Motor neuron (in vitro differentiated cells): ENCODE measurements at regions of chr12 and their contacts with region 1.

Region 1: DNA sequence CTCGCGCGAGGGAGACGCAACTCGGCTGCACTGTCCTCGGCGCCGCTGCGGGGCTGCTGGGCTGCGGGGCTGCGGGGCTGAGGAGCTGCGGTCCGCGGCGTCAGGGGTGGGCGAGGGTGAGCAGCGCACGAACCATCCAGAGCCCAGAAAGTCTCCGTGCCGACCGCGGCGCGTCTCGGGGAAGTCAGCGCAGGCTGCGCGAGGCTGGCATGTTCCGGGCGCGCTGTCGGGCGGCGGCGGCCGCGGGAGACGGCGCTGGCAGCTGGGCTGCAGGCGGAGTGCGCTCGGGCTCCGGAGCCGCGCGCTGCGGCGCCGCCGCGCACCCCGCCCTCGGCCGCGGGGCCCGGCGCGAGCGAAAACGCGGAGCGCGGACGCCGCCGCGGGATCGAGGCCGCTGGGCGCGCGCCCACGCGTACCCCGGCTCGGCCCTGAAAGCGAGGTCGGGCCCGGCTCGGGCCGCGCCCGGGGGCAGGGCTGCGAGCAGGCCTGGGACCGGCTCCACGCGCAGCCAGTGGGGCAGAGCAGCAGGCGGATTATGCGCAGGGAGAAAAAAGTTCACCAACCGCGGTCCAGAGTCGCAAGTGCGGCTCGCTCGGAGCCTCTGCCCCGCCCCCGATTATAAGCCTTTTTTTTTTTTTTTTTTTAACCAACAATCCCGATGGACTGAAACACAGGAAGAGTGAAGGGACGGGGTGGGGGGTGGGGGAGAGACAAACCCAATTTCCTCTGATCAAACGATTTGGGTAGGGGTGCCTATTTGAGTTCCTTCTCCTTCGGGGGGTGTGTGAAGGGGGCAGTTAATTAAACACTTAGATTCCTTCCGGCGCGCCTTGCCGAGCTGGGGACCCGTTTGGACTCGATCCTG is at the start of gene PRICKLE1:
- ATAC-seq: peak; percentile 68 to 81 (median 73)
- H3K4me3 ChIP-seq: peak within 1 kb of the TSS; percentile 60 to 93 (median 75)
- H3K27ac ChIP-seq: no peak within 1 kb of the TSS
- H3K4me1 ChIP-seq: peaks cover 7 to 12% of the 10 kb centered on the region in 2 donors
- total RNA-seq, gene PRICKLE1: 3.7 to 105 (median 17.2) TPM

Region 2: DNA sequence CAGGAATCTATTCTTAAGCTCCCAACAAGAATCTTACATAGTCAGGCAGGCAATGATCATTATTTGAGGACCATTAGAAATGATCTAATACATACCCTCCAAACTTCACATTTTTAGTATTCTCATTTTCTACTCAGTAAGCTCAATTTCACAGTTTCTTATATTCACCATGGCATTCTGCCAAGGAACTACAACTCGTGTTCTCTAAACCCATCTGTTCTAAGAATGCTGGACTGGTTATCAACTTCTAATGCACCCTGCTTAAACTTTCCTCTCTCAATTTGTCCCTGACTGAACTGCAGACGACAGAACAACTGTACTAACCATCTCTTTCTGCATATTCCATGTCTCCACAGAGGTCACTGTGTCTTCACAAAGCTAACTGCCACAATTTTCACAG is 503.7 kb before region 1 on chr12:
- in situ Hi-C with region 1: no loop called
- ATAC-seq: no peak
- H3K4me3 ChIP-seq: no peak overlapping the region
- H3K27ac ChIP-seq: no peak overlapping the region
- H3K4me1 ChIP-seq: peaks cover 0 to 8% of the 10 kb centered on the region in 2 donors

Region 3: DNA sequence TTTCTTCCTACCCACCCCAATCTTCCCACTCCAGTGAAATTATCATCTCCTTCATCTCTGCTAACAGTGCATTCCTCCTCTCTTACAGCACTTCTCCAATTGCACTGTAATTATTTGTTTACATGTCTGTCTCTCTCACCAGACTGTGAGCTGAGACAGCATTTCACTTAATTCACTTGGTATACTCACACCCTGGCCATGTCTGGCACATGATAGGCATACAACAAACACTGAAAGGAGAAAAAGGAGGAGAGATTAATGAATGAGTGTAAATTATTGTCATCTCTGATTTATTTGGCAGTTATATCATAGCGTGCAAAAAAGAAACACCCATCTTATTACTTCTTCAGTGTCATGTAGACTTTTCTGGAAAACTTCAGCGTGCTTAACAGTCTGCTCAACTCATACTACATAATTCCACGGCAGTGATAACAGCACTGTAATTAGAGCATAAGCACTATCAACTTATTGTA is 510.0 kb after region 1 on chr12:
- in situ Hi-C with region 1: loop called in 1 of 9 experiments (anchors 25 kb)
- ATAC-seq: peak in 2 of 8 experiments; percentile 6 to 32
- H3K4me3 ChIP-seq: no peak overlapping the region
- H3K27ac ChIP-seq: no peak overlapping the region
- H3K4me1 ChIP-seq: peaks cover 0 to 13% of the 10 kb centered on the region in 2 donors